A549 (cell line): ENCODE measurements at regions of chr17 and their contacts with region 1.

Region 1: DNA sequence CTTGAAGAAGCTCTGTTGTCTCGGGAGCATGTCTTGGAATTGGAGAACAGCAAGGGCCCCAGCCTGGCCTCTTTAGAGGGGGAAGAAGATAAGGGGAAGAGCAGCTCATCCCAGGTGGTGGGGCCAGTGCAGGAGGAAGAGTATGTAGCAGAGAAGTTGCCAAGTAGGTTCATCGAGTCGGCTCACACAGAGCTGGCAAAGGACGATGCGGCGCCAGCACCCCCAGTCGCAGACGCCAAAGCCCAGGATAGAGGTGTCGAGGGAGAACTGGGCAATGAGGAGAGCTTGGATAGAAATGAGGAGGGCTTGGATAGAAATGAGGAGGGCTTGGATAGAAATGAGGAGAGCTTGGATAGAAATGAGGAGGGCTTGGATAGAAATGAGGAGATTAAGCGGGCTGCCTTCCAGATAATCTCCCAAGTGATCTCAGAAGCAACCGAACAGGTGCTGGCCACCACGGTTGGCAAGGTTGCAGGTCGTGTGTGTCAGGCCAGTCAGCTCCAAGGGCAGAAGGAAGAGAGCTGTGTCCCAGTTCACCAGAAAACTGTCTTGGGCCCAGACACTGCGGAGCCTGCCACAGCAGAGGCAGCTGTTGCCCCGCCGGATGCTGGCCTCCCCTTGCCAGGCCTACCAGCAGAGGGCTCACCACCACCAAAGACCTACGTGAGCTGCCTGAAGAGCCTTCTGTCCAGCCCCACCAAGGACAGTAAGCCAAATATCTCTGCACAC is 21.2 kb downstream of the AKAP1 start:
- DNase-seq: peak in 1 of 2 experiments; percentile 57
- ATAC-seq: peak; percentile 70 to 91
- H3K4me3 ChIP-seq: no peak overlapping the region
- H3K27ac ChIP-seq: peak overlapping the region in 1 of 2 experiments; percentile 63; a peak in 2 of 6 replicates
- H3K4me1 ChIP-seq: peaks cover 30% of the 10 kb centered on the region
- CTCF ChIP-seq: peak; percentile 52
- EP300 ChIP-seq: no peak
- POLR2A ChIP-seq: no peak
- RAD21 ChIP-seq: peak; percentile 25 to 33; a peak in 2 of 5 replicates

Region 2: DNA sequence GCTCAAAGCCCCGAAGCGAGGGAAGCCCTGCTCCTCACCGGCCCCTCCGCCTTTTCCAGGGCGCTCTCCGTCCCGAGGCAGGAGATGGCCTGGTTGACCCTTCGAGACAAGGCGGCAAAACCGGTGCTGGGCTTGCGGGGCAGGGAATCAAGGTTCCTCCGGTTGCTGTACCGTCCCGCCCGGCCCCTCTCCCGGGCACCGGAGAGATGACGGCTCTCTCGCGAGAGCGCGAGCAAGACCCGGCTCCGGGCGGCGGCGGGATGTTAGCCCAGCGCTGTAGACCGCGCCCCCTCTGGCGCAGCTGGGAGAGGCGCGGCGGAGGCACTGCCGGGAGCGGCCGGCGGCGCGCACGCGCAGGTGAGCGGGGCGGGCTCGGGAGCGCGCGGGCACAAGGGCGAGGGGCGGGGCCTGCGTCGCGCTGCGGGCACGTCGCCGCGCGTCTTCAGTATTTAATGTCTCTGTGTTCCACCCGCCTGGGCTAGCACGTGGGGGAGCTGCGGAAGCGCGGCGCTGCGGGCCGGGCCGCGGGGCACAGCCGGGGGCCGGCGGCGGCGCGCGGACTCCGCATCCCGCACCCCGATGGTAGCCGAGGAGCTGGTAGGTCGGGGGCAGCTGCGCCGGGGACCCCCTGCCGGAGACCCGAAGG is 21.3 kb before region 1 on chr17 and contains the start of gene AKAP1:
- CTCF ChIA-PET with region 1: interaction called, 16 read pairs
- POLR2A ChIA-PET with region 1: interaction called, 8 read pairs
- DNase-seq: peak; percentile 96 to 99
- ATAC-seq: peak; percentile 85 to 92
- H3K4me3 ChIP-seq: peak within 1 kb of the TSS; percentile 72
- H3K27ac ChIP-seq: peak within 1 kb of the TSS; percentile 92
- H3K4me1 ChIP-seq: peaks cover 15% of the 10 kb centered on the region
- CTCF ChIP-seq: no peak
- EP300 ChIP-seq: no peak
- POLR2A ChIP-seq: peak; percentile 97
- RAD21 ChIP-seq: peak in 1 of 2 experiments; percentile 29; a peak in 1 of 5 replicates
- polyA plus RNA-seq, gene AKAP1: 45.8 and 91.1 TPM in 2 replicates

Region 3: DNA sequence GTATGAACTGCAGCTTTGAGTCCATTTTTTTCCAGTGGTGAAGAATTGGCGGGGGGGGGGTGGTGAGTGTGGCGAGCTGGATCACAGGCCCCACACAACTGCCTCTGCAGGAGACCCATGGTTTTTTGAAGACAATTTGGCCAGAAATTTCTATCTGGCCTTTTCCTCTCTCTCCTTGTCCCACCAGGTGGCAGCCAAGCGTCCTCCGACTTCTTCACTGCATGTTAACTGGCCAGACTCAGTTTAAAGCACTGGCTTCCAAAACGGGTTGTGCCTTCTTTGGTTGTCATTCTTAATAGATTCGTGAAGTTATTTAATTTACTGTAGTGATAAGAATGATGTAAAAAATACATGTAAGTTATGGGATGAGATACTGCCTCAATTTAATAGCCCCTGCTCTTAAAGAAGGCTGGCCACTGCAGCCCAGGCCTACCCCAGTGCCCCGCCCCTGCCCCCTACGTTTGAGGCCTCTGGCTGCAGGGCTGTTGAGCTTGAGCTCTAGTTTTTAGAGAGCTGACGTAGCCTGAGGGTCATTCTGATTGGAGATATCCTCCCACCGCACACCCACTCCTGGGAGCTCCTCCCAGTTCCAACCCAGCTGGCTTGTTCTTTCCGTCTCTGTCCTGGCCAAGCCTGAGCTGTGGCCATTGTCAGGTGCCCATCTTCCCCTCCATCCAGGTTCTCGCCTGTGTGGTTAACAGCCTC is 15.2 kb after region 1 on chr17:
- CTCF ChIA-PET with region 1: interaction called, 77 read pairs
- POLR2A ChIA-PET with region 1: no interaction called
- DNase-seq: peak; percentile 56 to 77
- ATAC-seq: peak; percentile 82 to 89
- H3K4me3 ChIP-seq: no peak overlapping the region
- H3K27ac ChIP-seq: no peak overlapping the region
- H3K4me1 ChIP-seq: 0 out of 3 replicates have a peak, but pooled peaks cover 4% of the 10 kb centered on the region
- CTCF ChIP-seq: peak; percentile 63
- EP300 ChIP-seq: no peak
- POLR2A ChIP-seq: no peak
- RAD21 ChIP-seq: peak; percentile 54 to 57

Region 4: DNA sequence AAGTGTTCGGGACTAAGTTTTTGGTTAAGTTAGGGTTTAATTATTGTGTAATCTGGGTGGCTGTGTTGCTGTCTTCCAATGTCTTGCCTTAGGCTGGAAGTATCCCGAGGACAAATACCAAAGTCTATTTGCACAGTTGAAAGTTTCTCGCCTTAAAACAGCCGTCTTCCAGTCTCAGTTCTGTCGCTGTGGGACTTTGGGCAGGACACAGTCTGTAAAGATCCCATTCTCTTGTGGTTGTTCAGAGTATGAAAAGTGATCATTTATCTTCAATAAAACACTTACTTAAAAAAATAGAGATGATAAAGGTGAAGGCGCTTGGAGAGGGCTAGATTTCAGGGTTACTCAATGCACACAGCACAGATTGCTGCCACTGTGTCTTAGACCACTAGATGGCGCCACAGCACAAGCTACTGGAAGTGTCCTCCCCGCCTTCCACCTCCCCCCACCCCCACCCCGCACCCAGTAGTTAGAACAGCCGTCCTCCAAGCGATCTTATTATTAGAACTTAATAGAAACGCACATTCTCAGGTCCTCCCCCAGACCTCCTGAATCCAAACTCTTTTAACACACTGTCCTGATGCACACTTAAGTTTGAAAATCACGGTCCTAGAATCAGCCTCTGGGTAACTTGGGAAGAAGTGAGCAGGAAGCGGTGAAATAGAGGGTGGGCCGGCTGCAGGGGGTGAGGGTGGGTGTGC is 24.6 kb after region 1 on chr17:
- CTCF ChIA-PET with region 1: interaction called, 26 read pairs
- POLR2A ChIA-PET with region 1: no interaction called
- DNase-seq: peak; percentile 82 to 99
- ATAC-seq: peak; percentile 95 to 96
- H3K4me3 ChIP-seq: peak overlapping the region; percentile 38
- H3K27ac ChIP-seq: peak overlapping the region; percentile 66 to 84
- H3K4me1 ChIP-seq: no peaks in the 10 kb centered on the region
- CTCF ChIP-seq: peak; percentile 99
- EP300 ChIP-seq: no peak
- POLR2A ChIP-seq: no peak
- RAD21 ChIP-seq: peak; percentile 92 to 100